WTC11 (cell line): ENCODE measurements at regions of chr17 and their contacts with region 1.

Region 1: GRCh38 chr17:61862975-61863800 is at the start of gene BRIP1:
- DNase-seq: peak; percentile 94
- ATAC-seq: peak; percentile 98
- H3K4me3 Mint-ChIP-seq: peak within 1 kb of the TSS; percentile 98
- H3K27ac Mint-ChIP-seq: peak within 1 kb of the TSS; percentile 96
- H3K4me1 Mint-ChIP-seq: peaks cover 20% of the 10 kb centered on the region
- H3K27me3 Mint-ChIP-seq: no peaks in the 10 kb centered on the region
- CTCF ChIP-seq: no peak
- total RNA-seq, gene BRIP1: 13.8 to 17.6 TPM (median 16.0 TPM) in 3 replicates

Region 2: DNA sequence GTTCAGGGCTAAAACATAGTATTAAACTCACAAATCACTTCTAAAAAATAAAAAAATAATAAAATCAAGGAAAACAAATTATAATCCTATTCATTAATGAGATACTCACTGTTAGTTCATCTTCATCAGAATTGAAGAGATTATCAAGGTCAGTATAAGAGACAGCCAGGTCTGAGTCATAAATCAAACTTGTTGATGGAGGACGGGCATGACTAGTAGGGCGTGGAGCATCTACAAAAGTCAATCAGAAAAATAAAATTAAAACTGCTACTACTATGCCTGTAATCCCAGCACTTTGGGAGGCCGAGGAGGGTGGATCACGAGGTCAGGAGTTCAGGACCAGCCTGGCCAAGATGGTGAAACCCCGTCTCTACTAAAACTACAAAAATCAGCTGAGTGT is 123.7 kb after region 1 on chr17:
- CTCF ChIA-PET with region 1: no interaction called
- POLR2A ChIA-PET with region 1: no interaction called
- DNase-seq: no peak
- ATAC-seq: no peak
- H3K4me3 Mint-ChIP-seq: no peak overlapping the region
- H3K27ac Mint-ChIP-seq: no peak overlapping the region
- H3K4me1 Mint-ChIP-seq: no peaks in the 10 kb centered on the region
- H3K27me3 Mint-ChIP-seq: no peaks in the 10 kb centered on the region
- CTCF ChIP-seq: no peak

Region 3: GRCh38 chr17:61997664-61998063 is 134.5 kb after region 1 on chr17:
- CTCF ChIA-PET with region 1: no interaction called
- POLR2A ChIA-PET with region 1: interaction called, 10 read pairs
- DNase-seq: no peak
- ATAC-seq: no peak
- H3K4me3 Mint-ChIP-seq: no peak overlapping the region
- H3K27ac Mint-ChIP-seq: no peak overlapping the region
- H3K4me1 Mint-ChIP-seq: peaks cover 4% of the 10 kb centered on the region; the same call in 1 of the 2 replicates
- H3K27me3 Mint-ChIP-seq: no peaks in the 10 kb centered on the region
- CTCF ChIP-seq: no peak